AG04449 (cell line): ENCODE measurements at regions of chr11 and their contacts with region 1.

Region 1: DNA sequence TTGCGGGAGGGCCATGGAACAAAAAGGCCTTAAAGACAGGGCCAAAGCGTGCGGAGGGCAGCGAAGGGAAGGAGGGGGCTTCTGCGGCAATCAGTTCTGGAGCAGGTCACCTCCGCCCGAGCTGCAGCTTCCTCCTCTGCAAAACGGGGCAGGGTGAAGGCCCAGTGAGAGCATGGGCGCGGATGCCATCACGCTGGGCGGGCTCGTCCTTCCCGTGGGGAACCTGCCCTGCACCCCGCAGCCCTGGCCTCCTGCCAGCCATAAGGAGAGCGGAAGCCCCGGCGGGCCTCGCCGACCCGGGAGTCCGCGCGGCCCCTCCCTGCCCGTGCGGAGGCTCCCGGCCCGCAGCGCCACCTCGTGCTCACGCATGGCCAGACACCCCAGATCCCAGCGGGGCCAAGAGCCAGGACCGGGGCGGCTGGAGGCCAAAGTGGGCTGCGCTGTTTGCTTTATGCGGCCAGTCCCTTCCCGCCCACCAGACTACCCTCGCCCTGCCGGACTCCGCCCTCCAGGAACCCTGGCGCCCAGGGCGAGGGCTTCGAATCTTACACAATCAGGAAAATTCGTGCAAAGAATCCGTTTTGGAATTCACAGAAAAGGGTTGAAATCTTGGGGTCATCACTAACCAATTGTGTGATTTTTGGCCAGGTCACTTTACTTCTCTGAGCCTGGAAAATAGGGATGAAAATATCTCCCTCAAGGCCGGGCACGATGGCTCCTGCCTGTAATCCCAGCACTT is 16.1 kb downstream of the TSKU start:
- DNase-seq: no peak
- H3K4me3 ChIP-seq: peak overlapping the region; percentile 18
- CTCF ChIP-seq: peak; percentile 92

Region 2: DNA sequence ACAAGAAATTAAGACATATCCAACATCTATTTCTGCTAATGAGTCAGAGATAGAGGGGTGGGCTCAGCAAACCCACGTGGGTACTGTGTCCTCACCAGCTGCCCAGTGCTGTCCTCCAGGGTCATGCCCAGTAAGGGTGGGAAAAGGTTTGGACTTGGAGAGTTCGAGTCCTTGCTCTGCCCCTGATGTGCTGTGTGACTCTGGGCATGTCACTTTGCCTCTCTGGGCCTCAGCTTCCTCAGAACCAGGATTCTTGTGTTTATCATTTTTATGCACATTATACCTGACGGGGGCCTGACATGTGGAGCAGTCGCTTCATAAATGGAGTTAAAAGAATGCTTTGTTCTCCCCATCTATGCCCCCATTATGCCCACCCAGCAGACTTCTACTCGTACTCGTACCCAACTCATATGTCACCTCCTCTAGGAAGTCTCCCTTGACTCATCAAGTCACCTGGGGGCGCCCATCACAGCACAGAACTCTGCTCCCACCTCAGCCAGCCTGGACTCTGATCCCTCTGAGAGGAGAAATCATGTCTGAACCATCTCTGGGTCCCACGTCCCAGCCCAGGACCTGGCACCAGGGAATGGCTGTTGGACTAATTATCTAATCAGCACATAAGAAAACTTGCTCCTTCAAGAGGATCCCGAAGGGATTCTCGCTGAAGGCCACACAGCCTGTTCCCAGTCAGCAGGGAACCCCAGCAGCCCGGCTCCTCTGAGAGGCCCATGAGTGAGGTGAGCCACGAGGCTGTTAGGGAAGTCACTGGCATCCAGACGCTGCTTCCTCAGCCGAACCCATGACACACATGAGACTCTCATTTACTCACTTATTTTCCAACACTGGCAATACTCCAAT is 54.8 kb before region 1 on chr11:
- CTCF ChIA-PET with region 1: interaction called, 28 read pairs
- POLR2A ChIA-PET with region 1: no interaction called
- DNase-seq: no peak
- H3K4me3 ChIP-seq: no peak overlapping the region
- CTCF ChIP-seq: no peak

Region 3: GRCh38 chr11:76770642-76771445 is 28.4 kb before region 1 on chr11:
- CTCF ChIA-PET with region 1: interaction called, 11 read pairs
- POLR2A ChIA-PET with region 1: no interaction called
- DNase-seq: peak; percentile 94
- H3K4me3 ChIP-seq: no peak overlapping the region
- CTCF ChIP-seq: no peak

Region 4: DNA sequence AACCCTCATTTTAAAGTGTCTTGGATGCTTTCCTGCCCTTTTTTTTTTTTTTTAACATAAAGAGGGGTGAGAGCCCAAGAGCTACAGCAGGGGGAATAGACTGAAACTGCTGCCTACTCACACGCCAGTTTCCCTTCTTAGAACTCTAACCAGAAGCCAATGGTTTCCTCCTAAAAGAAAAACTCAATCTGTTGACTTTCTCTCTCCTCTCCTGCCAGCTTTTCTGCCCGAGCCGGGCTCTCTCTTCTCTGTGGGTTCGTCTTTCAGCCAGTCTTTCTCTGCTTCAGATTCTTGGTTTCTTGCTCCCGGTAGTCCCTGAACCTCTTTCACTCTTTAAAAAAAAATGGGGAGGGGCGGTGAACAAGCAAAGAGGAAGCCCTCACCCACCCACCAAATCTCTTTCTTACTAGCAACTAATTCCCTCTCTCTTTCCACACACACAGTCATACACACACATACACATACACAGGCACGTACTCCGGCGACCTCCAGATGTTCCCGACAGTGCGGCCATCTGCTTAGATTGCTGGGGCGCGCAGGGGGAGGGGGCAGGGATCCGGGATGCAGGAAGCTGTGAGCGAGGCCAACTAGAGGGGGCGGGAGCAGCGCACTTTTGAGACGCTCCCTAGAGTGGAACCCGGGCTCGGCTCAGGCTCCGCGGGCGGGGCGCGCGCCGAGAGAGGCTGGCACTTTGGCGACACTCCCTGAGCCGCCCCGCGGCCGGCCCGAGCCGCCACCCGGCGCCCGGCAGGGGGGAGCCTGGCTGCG is 16.5 kb before region 1 on chr11:
- CTCF ChIA-PET with region 1: interaction called, 11 read pairs
- POLR2A ChIA-PET with region 1: no interaction called
- DNase-seq: peak; percentile 74
- H3K4me3 ChIP-seq: peak overlapping the region; percentile 98
- CTCF ChIP-seq: no peak